Body of pancreas (tissue), 4 donors: ENCODE measurements at regions of chr15 and their contacts with region 1.

Region 1: DNA sequence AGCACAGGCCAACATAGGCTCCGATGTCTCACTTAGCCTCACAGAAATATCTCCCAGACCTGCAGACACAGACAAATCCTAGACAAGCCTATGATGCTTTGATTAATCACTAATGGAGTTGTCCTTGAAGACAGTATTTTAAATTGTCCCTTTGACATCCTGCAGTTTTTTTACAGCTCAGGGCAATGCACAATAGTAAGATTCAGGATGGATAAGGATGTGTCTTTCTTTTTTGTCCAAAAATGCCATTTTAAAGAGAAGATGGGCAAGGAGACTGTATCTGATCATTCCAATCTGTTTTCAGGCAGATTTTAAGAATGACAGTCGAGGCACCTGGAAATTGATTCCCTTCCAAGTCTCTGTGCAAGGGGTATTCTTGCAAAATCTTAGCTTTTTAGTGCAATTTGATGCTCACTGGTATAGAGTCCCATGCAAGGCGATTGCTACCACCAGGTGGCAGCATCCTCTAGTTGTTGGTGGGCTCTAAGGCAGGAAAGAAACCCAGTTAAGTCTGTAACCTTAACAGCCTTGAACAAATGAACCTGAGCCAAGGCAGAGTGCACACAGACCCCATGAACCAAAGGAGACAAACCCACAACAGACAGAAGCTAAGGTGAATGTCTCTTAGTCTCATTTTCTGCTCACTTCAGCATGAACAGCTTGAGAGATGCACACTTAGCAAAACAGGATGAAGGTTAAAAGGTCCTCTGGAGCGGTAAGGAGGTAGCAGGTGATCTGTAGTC is 51.2 kb upstream of the MINAR1 start:
- DNase-seq: peak; percentile 73 to 86 (median 79)
- ATAC-seq: peak; percentile 78
- H3K4me3 ChIP-seq: no peak overlapping the region
- H3K27ac ChIP-seq: no peak overlapping the region
- H3K4me1 ChIP-seq: no peaks in the 10 kb centered on the region
- H3K27me3 ChIP-seq: no peaks in the 10 kb centered on the region
- CTCF ChIP-seq: peak; percentile 78 to 85 (median 83)
- POLR2A ChIP-seq: no peak

Region 2: DNA sequence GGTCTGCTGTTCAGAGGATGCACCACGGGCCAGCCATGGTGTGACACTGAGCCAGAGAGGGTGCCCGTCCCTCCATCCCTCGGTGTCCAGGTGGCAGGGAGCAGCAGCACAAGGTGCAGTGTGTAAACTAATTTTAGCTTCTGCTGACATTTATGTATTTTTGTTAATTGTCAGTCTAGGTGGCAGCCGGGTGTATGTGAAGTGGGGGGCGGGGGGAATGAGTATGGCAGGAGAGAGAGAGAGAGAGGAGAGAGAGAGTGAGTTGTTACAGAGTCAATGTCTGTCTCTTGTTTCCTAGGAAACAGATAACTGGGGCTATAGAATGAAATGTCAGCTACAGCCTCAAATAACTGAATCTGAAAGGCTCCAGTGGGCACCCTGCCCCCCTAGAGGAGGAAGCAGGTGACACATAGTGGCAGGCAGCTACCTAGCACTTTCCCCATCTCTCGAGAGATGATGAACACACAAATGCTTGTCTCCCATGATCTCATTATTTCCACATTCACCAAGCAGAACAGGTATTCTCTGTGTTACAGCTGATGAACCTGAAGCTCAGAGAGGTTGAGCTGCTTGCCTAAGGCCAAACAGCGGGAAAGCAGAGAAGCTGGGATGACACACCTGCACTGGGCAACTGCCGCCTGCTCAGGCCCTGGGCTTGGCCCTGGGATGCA is 315.1 kb before region 1 on chr15:
- intact Hi-C with region 1: no loop called
- DNase-seq: peak in 3 of 4 donors; percentile 22 to 32 (median 30)
- ATAC-seq: no peak
- H3K4me3 ChIP-seq: no peak overlapping the region
- H3K27ac ChIP-seq: no peak overlapping the region
- H3K4me1 ChIP-seq: no peaks in the 10 kb centered on the region
- H3K27me3 ChIP-seq: no peaks in the 10 kb centered on the region
- CTCF ChIP-seq: no peak
- POLR2A ChIP-seq: no peak

Region 3: DNA sequence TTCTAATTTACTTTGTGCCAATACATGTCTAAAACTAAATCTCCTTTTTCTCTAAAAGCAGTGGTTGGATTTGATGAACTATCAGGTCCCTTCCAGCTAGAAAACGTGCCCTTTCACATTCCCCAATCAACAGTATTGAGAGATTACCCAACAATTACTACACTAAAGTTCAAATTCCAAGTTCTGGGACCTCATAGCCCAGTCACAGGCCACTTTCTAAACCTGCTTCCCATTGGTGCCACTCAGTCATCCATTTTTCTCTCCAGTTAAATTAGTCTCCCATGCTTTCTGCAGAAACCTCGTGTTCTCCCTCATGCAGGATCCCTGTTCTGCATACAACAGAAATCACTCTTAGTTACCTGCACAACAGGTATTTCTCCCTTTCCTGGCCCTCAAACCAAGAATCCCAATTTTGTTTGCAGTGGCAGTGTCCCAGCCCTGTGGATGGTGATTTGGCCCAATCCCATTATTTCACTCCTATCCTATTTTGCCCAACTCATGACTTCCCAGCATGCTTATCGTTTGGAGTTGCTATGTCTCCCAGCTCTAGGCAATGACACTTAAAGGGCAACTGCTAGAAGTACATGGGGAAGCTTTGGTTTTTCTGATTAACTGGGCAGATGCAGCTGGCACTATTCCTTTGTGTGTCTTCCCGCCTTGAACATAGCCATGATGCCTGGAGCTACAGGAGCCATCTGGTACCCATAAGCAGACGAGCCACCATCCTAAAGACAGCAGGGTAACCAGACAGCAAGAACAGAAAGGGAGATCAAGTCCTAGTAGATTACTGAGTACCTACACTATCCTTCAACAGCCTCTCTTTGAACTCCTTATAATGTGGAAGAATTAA is 275.4 kb after region 1 on chr15:
- intact Hi-C with region 1: no loop called
- DNase-seq: no peak
- ATAC-seq: no peak
- H3K4me3 ChIP-seq: no peak overlapping the region
- H3K27ac ChIP-seq: no peak overlapping the region
- H3K4me1 ChIP-seq: no peaks in the 10 kb centered on the region
- H3K27me3 ChIP-seq: no peaks in the 10 kb centered on the region
- CTCF ChIP-seq: no peak
- POLR2A ChIP-seq: no peak

Region 4: GRCh38 chr15:80173022-80173759 is 792.3 kb after region 1 on chr15:
- intact Hi-C with region 1: loop called (anchors 10 kb)
- DNase-seq: peak; percentile 82 to 86 (median 84)
- ATAC-seq: peak; percentile 89
- H3K4me3 ChIP-seq: no peak overlapping the region
- H3K27ac ChIP-seq: no peak overlapping the region
- H3K4me1 ChIP-seq: no peaks in the 10 kb centered on the region
- H3K27me3 ChIP-seq: no peaks in the 10 kb centered on the region
- CTCF ChIP-seq: peak; percentile 42 to 86 (median 84)
- POLR2A ChIP-seq: no peak